Aorta (tissue), 5 donors: ENCODE measurements at regions of chr13 and their contacts with region 1.

Region 1: GRCh38 chr13:95378603-95379002 is 77.4 kb upstream of the ABCC4 start:
- DNase-seq: no peak
- ATAC-seq: no peak
- H3K4me3 ChIP-seq: no peak overlapping the region
- H3K27ac ChIP-seq: no peak overlapping the region
- H3K4me1 ChIP-seq: no peaks in the 10 kb centered on the region
- H3K27me3 ChIP-seq: no peaks in the 10 kb centered on the region

Region 2: DNA sequence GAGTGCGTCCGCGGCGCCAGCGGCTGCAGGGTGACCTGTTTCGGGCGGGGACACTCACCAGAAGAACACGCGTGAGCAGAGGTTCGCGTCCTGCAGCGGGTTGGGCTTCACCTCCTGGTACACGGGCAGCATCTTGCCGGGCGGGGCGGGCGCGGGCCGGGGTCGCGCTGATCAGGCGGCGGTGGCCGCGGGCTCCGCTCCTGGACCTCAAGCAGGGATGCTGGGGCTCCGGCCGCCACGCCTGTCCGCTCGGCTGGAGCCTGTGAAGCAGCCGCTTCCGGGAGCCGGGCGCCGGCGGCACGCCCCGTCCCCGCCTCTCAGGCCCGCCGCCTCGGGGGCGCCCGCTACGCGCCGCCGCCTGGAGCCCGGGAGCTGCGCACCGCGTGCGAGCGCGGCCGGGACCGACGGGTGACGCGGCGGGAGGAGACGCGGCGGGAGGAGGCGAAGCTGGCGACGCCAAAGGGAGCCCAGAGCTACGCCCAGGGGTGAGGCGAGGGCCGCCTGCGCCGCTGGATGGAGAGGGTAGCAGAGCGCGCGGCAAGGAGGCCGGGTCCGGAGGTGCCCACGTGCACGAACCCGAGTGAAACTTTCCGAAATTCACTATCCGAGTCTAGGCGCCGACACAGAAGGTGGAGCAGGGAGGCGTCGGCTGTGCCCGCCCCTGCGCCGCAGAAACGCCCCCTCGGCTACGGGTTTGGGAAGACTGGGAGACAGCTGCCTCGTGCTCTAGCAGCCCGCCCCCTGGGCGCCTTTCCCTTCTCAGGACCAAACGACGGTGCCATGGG is 77.2 kb before region 1 on chr13 and contains the start of gene ABCC4:
- intact Hi-C with region 1: loop called in 1 of 2 experiments (anchors 5 kb)
- DNase-seq: peak; percentile 73 to 89
- ATAC-seq: peak; percentile 93
- H3K4me3 ChIP-seq: peak within 1 kb of the TSS; percentile 56 to 66
- H3K27ac ChIP-seq: peak within 1 kb of the TSS in 1 of 2 donors; percentile 2
- H3K4me1 ChIP-seq: no peaks in the 10 kb centered on the region
- H3K27me3 ChIP-seq: no peaks in the 10 kb centered on the region
- total RNA-seq, gene ABCC4: 11.3 to 18.6 TPM